WTC11 (cell line): ENCODE measurements at regions of chr1 and their contacts with region 1.

Region 1: GRCh38 chr1:22704440-22705067 is 6.1 kb upstream of the EPHB2 start:
- DNase-seq: peak; percentile 86
- ATAC-seq: peak; percentile 95
- H3K4me3 Mint-ChIP-seq: no peak overlapping the region
- H3K27ac Mint-ChIP-seq: no peak overlapping the region
- H3K4me1 Mint-ChIP-seq: 0 out of 2 replicates have a peak, but pooled peaks cover 7% of the 10 kb centered on the region
- H3K27me3 Mint-ChIP-seq: peaks cover 7% of the 10 kb centered on the region
- CTCF ChIP-seq: peak; percentile 81

Region 2: GRCh38 chr1:22673486-22674409 is 30.8 kb before region 1 on chr1:
- CTCF ChIA-PET with region 1: interaction called, 25 read pairs
- POLR2A ChIA-PET with region 1: no interaction called
- DNase-seq: peak; percentile 67
- ATAC-seq: peak; percentile 49
- H3K4me3 Mint-ChIP-seq: no peak overlapping the region
- H3K27ac Mint-ChIP-seq: no peak overlapping the region
- H3K4me1 Mint-ChIP-seq: peaks cover 7% of the 10 kb centered on the region; the same call in 1 of the 2 replicates
- H3K27me3 Mint-ChIP-seq: no peaks in the 10 kb centered on the region
- CTCF ChIP-seq: peak; percentile 46

Region 3: GRCh38 chr1:22717037-22717760 is 12.6 kb after region 1 on chr1:
- CTCF ChIA-PET with region 1: interaction called, 13 read pairs
- POLR2A ChIA-PET with region 1: no interaction called
- DNase-seq: no peak
- ATAC-seq: peak; percentile 75
- H3K4me3 Mint-ChIP-seq: no peak overlapping the region
- H3K27ac Mint-ChIP-seq: peak overlapping the region; percentile 53; the same call in 1 of the 2 replicates
- H3K4me1 Mint-ChIP-seq: peaks cover 10% of the 10 kb centered on the region
- H3K27me3 Mint-ChIP-seq: peaks cover 12% of the 10 kb centered on the region
- CTCF ChIP-seq: no peak

Region 4: DNA sequence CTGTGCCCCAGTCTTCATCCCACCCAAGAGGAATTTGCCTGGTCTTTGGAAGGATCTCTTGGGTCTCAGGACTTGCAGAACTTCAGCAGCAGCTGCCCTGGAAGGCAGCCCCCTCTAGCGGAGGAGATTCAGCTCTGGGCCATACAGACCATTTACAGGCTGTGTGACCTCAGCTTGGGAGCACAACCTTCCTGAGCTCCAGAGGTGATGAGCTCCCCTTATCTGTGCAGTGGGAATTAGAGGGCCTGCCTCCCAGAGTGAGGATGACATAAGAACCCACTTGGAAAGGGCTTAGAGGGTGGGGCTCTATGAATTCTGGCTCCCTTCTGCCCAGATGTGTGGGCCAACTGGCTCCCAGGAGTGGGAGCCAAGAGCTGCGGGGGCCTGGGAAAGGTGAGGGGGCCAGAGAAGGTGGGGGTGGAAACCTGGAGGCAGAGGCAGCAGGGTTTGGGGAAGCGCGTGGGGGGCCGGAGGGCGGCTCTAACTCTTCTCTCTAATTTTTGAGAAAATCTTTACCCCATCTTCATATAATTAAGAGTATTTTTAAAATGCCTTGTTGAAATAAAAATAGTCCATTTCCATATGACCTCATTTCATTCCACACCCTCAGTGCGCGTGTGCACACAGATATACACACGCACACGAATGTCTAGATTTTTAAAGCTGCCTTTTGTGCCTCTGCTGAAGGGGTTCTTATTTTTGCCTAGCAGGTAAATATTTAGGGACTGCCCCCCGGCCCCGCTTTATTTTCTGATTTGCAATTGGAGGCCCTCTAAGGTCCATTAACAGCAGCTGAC is 27.6 kb after region 1 on chr1:
- CTCF ChIA-PET with region 1: interaction called, 48 read pairs
- POLR2A ChIA-PET with region 1: no interaction called
- DNase-seq: peak; percentile 54
- ATAC-seq: peak; percentile 59
- H3K4me3 Mint-ChIP-seq: no peak overlapping the region
- H3K27ac Mint-ChIP-seq: no peak overlapping the region
- H3K4me1 Mint-ChIP-seq: peaks cover 12% of the 10 kb centered on the region
- H3K27me3 Mint-ChIP-seq: no peaks in the 10 kb centered on the region
- CTCF ChIP-seq: no peak

Region 5: GRCh38 chr1:22821012-22821411 is 116.5 kb after region 1 on chr1:
- CTCF ChIA-PET with region 1: interaction called, 12 read pairs
- POLR2A ChIA-PET with region 1: no interaction called
- DNase-seq: no peak
- ATAC-seq: no peak
- H3K4me3 Mint-ChIP-seq: no peak overlapping the region
- H3K27ac Mint-ChIP-seq: no peak overlapping the region
- H3K4me1 Mint-ChIP-seq: peaks cover 18% of the 10 kb centered on the region
- H3K27me3 Mint-ChIP-seq: no peaks in the 10 kb centered on the region
- CTCF ChIP-seq: no peak

Region 6: GRCh38 chr1:22969304-22969709 is 264.8 kb after region 1 on chr1:
- CTCF ChIA-PET with region 1: interaction called, 12 read pairs
- POLR2A ChIA-PET with region 1: no interaction called
- DNase-seq: no peak
- ATAC-seq: no peak
- H3K4me3 Mint-ChIP-seq: no peak overlapping the region
- H3K27ac Mint-ChIP-seq: no peak overlapping the region
- H3K4me1 Mint-ChIP-seq: peaks cover 12% of the 10 kb centered on the region
- H3K27me3 Mint-ChIP-seq: peaks cover 17% of the 10 kb centered on the region
- CTCF ChIP-seq: no peak